ENCODE measurements at regions of chr12 and their contacts with region 1.

Region 1: GRCh38 chr12:27549801-27550652 is 26.0 kb downstream of the PPFIBP1 start:
- DNase-seq: peak; percentile 82 to 95
- H3K4me3 ChIP-seq: peak overlapping the region; percentile 52; the same call in 1 of the 2 replicates
- H3K27ac ChIP-seq: peak overlapping the region; percentile 98
- H3K4me1 ChIP-seq: peaks cover 38% of the 10 kb centered on the region
- H3K27me3 ChIP-seq: no peaks in the 10 kb centered on the region
- CTCF ChIP-seq: no peak

Region 2: GRCh38 chr12:27588787-27589186 is 38.8 kb after region 1 on chr12:
- CTCF ChIA-PET with region 1: no interaction called
- POLR2A ChIA-PET with region 1: no interaction called
- intact Hi-C with region 1: loop called (anchors 1 kb)
- DNase-seq: peak in 1 of 2 experiments; percentile 41
- H3K4me3 ChIP-seq: no peak overlapping the region
- H3K27ac ChIP-seq: no peak overlapping the region
- H3K4me1 ChIP-seq: peaks cover 12% of the 10 kb centered on the region; the same call in 1 of the 2 replicates
- H3K27me3 ChIP-seq: no peaks in the 10 kb centered on the region
- CTCF ChIP-seq: no peak

Region 3: DNA sequence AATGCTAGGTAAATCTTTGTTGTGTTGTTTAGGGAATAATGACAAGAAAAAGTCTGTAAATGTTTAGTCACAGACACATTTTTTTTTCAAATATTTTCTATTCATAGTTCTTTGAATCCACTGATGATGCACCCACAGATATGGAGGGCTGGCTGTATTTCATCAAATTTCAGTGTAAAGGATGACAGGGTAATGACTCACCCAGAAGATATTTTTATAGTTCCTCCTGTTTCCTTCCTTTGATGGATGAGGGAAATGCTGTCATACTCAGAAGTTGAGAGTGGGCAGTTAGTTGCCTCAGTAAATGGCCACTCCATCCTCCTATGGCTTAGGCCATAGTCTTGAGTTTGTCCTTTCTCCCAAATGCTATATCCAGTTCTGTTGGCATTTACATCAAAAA is 69.3 kb after region 1 on chr12:
- CTCF ChIA-PET with region 1: interaction called, 4 read pairs
- POLR2A ChIA-PET with region 1: interaction called, 19 read pairs
- intact Hi-C with region 1: loop called (anchors 1 kb)
- DNase-seq: peak; percentile 34 to 86
- H3K4me3 ChIP-seq: no peak overlapping the region
- H3K27ac ChIP-seq: peak overlapping the region; percentile 55
- H3K4me1 ChIP-seq: peaks cover 25% of the 10 kb centered on the region
- H3K27me3 ChIP-seq: no peaks in the 10 kb centered on the region
- CTCF ChIP-seq: no peak

Region 4: DNA sequence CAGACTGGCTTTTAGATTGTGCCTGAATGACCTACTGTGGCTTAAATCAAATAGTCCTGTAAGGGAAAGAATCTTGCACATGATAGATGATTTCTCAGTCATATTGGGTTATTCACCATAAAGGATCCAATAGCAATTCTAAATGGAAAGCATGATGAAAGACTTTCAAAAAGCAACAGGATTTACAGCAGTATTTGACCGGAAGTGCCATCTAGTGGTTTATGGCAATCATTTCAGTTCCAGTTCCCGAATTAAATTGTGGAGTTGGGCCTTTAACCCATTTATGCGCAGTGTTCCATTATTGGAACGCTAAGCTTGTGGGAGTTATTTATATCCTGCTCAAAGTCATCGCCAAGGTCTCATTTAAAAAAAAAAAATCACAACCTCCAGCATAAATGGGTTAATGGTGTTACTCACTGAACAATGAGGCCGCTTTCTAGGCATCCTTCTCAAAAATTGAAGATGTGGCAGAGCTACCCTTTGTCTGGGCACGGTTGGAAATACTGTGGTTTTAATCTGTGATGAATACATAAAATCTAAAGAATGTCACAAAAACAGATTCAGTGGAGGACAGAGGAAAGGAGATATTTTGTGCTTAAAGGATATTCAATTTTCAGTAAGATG is 85.4 kb after region 1 on chr12:
- CTCF ChIA-PET with region 1: no interaction called
- POLR2A ChIA-PET with region 1: no interaction called
- intact Hi-C with region 1: loop called (anchors 1 kb)
- DNase-seq: peak in 1 of 2 experiments; percentile 59
- H3K4me3 ChIP-seq: no peak overlapping the region
- H3K27ac ChIP-seq: no peak overlapping the region
- H3K4me1 ChIP-seq: no peaks in the 10 kb centered on the region
- H3K27me3 ChIP-seq: no peaks in the 10 kb centered on the region
- CTCF ChIP-seq: peak; percentile 77

Measured in PC-9 (cell line).